Naive thymus-derived CD4-positive, alpha-beta T cell (primary cell): ENCODE measurements at regions of chr1 and their contacts with region 1.

Region 1: DNA sequence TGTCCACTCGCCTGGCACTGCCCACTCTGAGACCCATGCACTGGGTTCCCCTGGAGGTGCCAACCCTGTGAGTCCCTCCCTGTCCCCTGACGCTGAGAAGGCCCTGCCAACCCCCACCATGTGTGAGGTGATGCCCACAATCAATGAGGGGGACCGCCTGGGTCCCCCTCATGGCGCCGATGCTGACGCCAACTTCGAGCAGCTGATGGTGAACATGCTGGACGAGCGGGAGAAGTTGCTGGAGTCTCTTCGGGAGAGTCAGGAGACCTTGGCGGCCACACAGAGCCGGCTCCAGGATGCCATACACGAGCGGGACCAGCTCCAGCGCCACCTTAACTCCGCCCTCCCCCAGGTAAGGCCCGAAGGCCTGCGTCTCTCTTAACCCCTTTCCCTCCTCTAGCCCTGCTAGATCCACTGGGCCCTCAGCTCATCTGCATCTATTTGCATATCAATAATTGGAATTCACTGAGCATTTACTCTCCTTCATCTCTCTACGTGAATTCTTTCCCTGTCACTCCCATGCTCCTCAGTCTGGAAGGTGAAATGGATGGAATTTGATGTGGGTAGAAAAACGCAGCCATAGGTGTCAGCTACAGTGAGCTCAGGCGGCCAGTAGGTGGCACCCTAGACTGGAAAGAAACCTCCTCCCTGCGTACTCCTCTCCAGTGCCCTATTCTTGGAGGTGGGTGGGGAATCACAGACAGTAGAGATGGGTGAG is 12.8 kb downstream of the PPFIA4 start:
- DNase-seq: peak; percentile 19 to 65 (median 56)
- ATAC-seq: peak; percentile 90
- H3K4me3 ChIP-seq: no peak overlapping the region
- H3K4me3 Mint-ChIP-seq: peak overlapping the region in 1 of 10 donors; percentile 44
- H3K27ac ChIP-seq: no peak overlapping the region
- H3K27ac Mint-ChIP-seq: no peak overlapping the region
- H3K4me1 ChIP-seq: no peaks in the 10 kb centered on the region
- H3K4me1 Mint-ChIP-seq: peaks cover 3 to 15% (median 5%) of the 10 kb centered on the region in 7 donors
- H3K27me3 ChIP-seq: no peaks in the 10 kb centered on the region
- H3K27me3 Mint-ChIP-seq: peaks cover 0 to 7% (median 4%) of the 10 kb centered on the region in 5 donors

Region 2: GRCh38 chr1:203026031-203026989 is 12.7 kb before region 1 on chr1 and contains the start of gene PPFIA4:
- CTCF ChIA-PET with region 1: interaction called, 12 read pairs
- POLR2A ChIA-PET with region 1: no interaction called
- intact Hi-C with region 1: no loop called
- DNase-seq: peak; percentile 72 to 94 (median 89)
- ATAC-seq: peak; percentile 98
- H3K4me3 ChIP-seq: peak within 1 kb of the TSS; percentile 84
- H3K4me3 Mint-ChIP-seq: peak within 1 kb of the TSS; percentile 74 to 95 (median 84)
- H3K27ac ChIP-seq: peak within 1 kb of the TSS; percentile 53
- H3K27ac Mint-ChIP-seq: peak within 1 kb of the TSS; percentile 73 to 96 (median 85)
- H3K4me1 ChIP-seq: peaks cover 0 to 11% of the 10 kb centered on the region in 2 donors
- H3K4me1 Mint-ChIP-seq: peaks cover 0 to 24% (median 14%) of the 10 kb centered on the region in 7 donors
- H3K27me3 ChIP-seq: no peaks in the 10 kb centered on the region
- H3K27me3 Mint-ChIP-seq: peaks cover 0 to 9% (median 0%) of the 10 kb centered on the region in 5 donors
- total RNA-seq, gene PPFIA4: 0.40 to 45.5 (median 2.4) TPM

Region 3: GRCh38 chr1:203172128-203173010 is 133.3 kb after region 1 on chr1:
- CTCF ChIA-PET with region 1: interaction called, 4 read pairs
- POLR2A ChIA-PET with region 1: no interaction called
- intact Hi-C with region 1: loop called in 1 of 2 experiments (anchors 1 kb)
- DNase-seq: peak in 6 of 9 donors; percentile 13 to 58 (median 32)
- ATAC-seq: no peak
- H3K4me3 ChIP-seq: no peak overlapping the region
- H3K4me3 Mint-ChIP-seq: no peak overlapping the region
- H3K27ac ChIP-seq: no peak overlapping the region
- H3K27ac Mint-ChIP-seq: no peak overlapping the region
- H3K4me1 ChIP-seq: no peaks in the 10 kb centered on the region
- H3K4me1 Mint-ChIP-seq: peaks cover 0 to 4% (median 0%) of the 10 kb centered on the region in 7 donors
- H3K27me3 ChIP-seq: no peaks in the 10 kb centered on the region
- H3K27me3 Mint-ChIP-seq: no peaks in the 10 kb centered on the region

Region 4: GRCh38 chr1:203216274-203217138 is 177.5 kb after region 1 on chr1:
- CTCF ChIA-PET with region 1: interaction called, 46 read pairs
- POLR2A ChIA-PET with region 1: no interaction called
- intact Hi-C with region 1: loop called (anchors 1 kb)
- DNase-seq: peak in 8 of 9 donors; percentile 20 to 64 (median 50)
- ATAC-seq: peak; percentile 50
- H3K4me3 ChIP-seq: no peak overlapping the region
- H3K4me3 Mint-ChIP-seq: no peak overlapping the region
- H3K27ac ChIP-seq: no peak overlapping the region
- H3K27ac Mint-ChIP-seq: no peak overlapping the region
- H3K4me1 ChIP-seq: no peaks in the 10 kb centered on the region
- H3K4me1 Mint-ChIP-seq: peaks cover 2 to 8% (median 6%) of the 10 kb centered on the region in 7 donors
- H3K27me3 ChIP-seq: peaks cover 0 to 3% of the 10 kb centered on the region in 2 donors
- H3K27me3 Mint-ChIP-seq: peaks cover 0 to 26% (median 10%) of the 10 kb centered on the region in 5 donors

Region 5: DNA sequence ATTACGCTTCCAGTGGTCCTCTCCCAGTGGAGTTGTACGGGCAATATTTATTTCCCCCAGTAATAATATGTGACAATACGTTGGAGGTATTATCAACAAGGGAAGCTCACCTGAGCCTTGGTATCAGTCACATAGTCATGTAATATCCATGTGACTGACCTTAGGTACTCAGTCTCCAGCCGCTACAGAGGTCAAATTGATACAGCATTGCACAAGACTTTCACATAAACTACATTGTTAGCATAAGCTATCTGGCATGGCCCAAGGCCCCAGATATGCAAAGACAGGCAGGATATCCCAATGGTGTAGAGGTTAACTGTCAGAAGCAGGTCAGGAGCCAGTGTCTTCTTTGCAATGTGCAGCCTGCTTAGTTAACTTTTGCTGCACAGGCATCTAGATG is 205.7 kb after region 1 on chr1:
- CTCF ChIA-PET with region 1: no interaction called
- POLR2A ChIA-PET with region 1: no interaction called
- intact Hi-C with region 1: no loop called
- DNase-seq: no peak
- ATAC-seq: no peak
- H3K4me3 ChIP-seq: no peak overlapping the region
- H3K4me3 Mint-ChIP-seq: no peak overlapping the region
- H3K27ac ChIP-seq: no peak overlapping the region
- H3K27ac Mint-ChIP-seq: no peak overlapping the region
- H3K4me1 ChIP-seq: no peaks in the 10 kb centered on the region
- H3K4me1 Mint-ChIP-seq: no peaks in the 10 kb centered on the region
- H3K27me3 ChIP-seq: no peaks in the 10 kb centered on the region
- H3K27me3 Mint-ChIP-seq: peaks cover 11 to 49% (median 22%) of the 10 kb centered on the region in 5 donors

Region 6: GRCh38 chr1:203486618-203487370 is 447.7 kb after region 1 on chr1:
- CTCF ChIA-PET with region 1: interaction called, 9 read pairs
- POLR2A ChIA-PET with region 1: no interaction called
- intact Hi-C with region 1: loop called in 1 of 2 experiments (anchors 5 kb)
- DNase-seq: peak in 1 of 9 donors; percentile 5
- ATAC-seq: no peak
- H3K4me3 ChIP-seq: no peak overlapping the region
- H3K4me3 Mint-ChIP-seq: peak overlapping the region; percentile 58 to 84 (median 79)
- H3K27ac ChIP-seq: no peak overlapping the region
- H3K27ac Mint-ChIP-seq: peak overlapping the region; percentile 9 to 80 (median 72)
- H3K4me1 ChIP-seq: peaks cover 7 to 9% of the 10 kb centered on the region in 2 donors
- H3K4me1 Mint-ChIP-seq: peaks cover 0 to 20% (median 5%) of the 10 kb centered on the region in 7 donors
- H3K27me3 ChIP-seq: no peaks in the 10 kb centered on the region
- H3K27me3 Mint-ChIP-seq: peaks cover 0 to 5% (median 0%) of the 10 kb centered on the region in 5 donors